ENCODE measurements at regions of chr7 and their contacts with region 1.

Region 1: GRCh38 chr7:128231021-128231420 is 10.1 kb upstream of the LEP start:
- DNase-seq: no peak
- ATAC-seq: peak; percentile 74
- H3K4me3 Mint-ChIP-seq: no peak overlapping the region
- H3K27ac Mint-ChIP-seq: no peak overlapping the region
- H3K4me1 Mint-ChIP-seq: no peaks in the 10 kb centered on the region
- H3K27me3 Mint-ChIP-seq: peaks cover 10% of the 10 kb centered on the region

Region 2: GRCh38 chr7:127809261-127809702 is 421.7 kb before region 1 on chr7:
- CTCF ChIA-PET with region 1: no interaction called
- POLR2A ChIA-PET with region 1: no interaction called
- intact Hi-C with region 1: no loop called
- DNase-seq: peak; percentile 19
- ATAC-seq: peak; percentile 57
- H3K4me3 Mint-ChIP-seq: no peak overlapping the region
- H3K27ac Mint-ChIP-seq: no peak overlapping the region
- H3K4me1 Mint-ChIP-seq: peaks cover 39% of the 10 kb centered on the region
- H3K27me3 Mint-ChIP-seq: no peaks in the 10 kb centered on the region

Region 3: GRCh38 chr7:127905491-127906330 is 325.3 kb before region 1 on chr7:
- CTCF ChIA-PET with region 1: no interaction called
- POLR2A ChIA-PET with region 1: no interaction called
- intact Hi-C with region 1: no loop called
- DNase-seq: peak; percentile 48
- ATAC-seq: peak; percentile 75
- H3K4me3 Mint-ChIP-seq: no peak overlapping the region
- H3K27ac Mint-ChIP-seq: peak overlapping the region; percentile 34
- H3K4me1 Mint-ChIP-seq: peaks cover 66% of the 10 kb centered on the region
- H3K27me3 Mint-ChIP-seq: no peaks in the 10 kb centered on the region

Region 4: DNA sequence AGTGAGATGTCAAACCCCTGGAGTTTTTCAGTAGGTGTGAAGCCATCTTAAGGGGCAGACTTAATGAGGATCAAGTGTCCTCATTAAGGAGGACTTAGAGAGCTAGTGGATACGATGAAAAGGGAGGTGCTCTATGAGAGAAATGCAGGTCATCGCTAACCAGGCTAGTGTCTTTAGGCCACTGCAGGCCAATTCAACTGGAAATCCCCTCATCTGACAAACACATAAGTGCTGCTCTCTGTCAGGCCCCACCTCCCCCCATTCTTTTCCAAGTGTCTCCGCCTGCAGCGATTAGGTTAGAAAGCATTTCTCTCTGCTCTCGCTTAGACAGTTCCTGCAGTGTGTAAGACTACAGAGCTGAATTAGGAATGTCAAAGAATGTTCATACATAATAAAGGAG is 79.0 kb after region 1 on chr7:
- CTCF ChIA-PET with region 1: no interaction called
- POLR2A ChIA-PET with region 1: no interaction called
- intact Hi-C with region 1: loop called in 1 of 2 experiments (anchors 5 kb)
- DNase-seq: no peak
- ATAC-seq: no peak
- H3K4me3 Mint-ChIP-seq: no peak overlapping the region
- H3K27ac Mint-ChIP-seq: no peak overlapping the region
- H3K4me1 Mint-ChIP-seq: no peaks in the 10 kb centered on the region
- H3K27me3 Mint-ChIP-seq: no peaks in the 10 kb centered on the region

Region 5: GRCh38 chr7:128811631-128812430 is 580.8 kb after region 1 on chr7:
- CTCF ChIA-PET with region 1: no interaction called
- POLR2A ChIA-PET with region 1: no interaction called
- intact Hi-C with region 1: no loop called
- DNase-seq: no peak
- ATAC-seq: no peak
- H3K4me3 Mint-ChIP-seq: no peak overlapping the region
- H3K27ac Mint-ChIP-seq: no peak overlapping the region
- H3K4me1 Mint-ChIP-seq: no peaks in the 10 kb centered on the region
- H3K27me3 Mint-ChIP-seq: no peaks in the 10 kb centered on the region

Measured in activated CD4-positive, alpha-beta T cell treated with anti-CD3 and anti-CD28 coated beads for 36 hours (primary cell).